Naive thymus-derived CD4-positive, alpha-beta T cell (primary cell): ENCODE measurements at regions of chr6 and their contacts with region 1.

Region 1: GRCh38 chr6:87929843-87930288 is 117.8 kb upstream of the SPACA1 start:
- DNase-seq: peak; percentile 5 to 55 (median 43)
- ATAC-seq: peak; percentile 83
- H3K4me3 ChIP-seq: no peak overlapping the region
- H3K4me3 Mint-ChIP-seq: no peak overlapping the region
- H3K27ac ChIP-seq: no peak overlapping the region
- H3K27ac Mint-ChIP-seq: no peak overlapping the region
- H3K4me1 ChIP-seq: peaks cover 0 to 5% of the 10 kb centered on the region in 2 donors
- H3K4me1 Mint-ChIP-seq: peaks cover 0 to 3% (median 0%) of the 10 kb centered on the region in 7 donors
- H3K27me3 ChIP-seq: no peaks in the 10 kb centered on the region
- H3K27me3 Mint-ChIP-seq: peaks cover 0 to 15% (median 3%) of the 10 kb centered on the region in 5 donors

Region 2: DNA sequence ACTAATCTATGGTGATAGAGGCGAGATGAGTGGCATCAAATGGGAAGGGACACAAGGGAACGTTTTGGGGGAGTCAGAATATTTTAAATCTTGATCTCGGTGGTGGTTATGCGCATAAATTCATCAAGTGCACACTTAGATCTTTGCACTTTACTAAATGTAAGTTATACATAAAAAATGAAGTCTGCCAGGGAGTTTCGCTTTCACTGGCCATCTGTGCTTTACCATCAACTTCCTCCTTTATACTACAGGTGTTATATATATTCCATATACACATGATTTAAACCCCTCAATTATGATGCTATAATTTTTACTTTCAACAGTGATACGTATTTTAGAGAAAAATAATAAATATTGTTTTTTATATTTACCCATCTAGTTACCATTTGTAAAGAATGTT is 130.2 kb before region 1 on chr6:
- CTCF ChIA-PET with region 1: no interaction called
- POLR2A ChIA-PET with region 1: no interaction called
- intact Hi-C with region 1: no loop called
- DNase-seq: no peak
- ATAC-seq: no peak
- H3K4me3 ChIP-seq: no peak overlapping the region
- H3K4me3 Mint-ChIP-seq: no peak overlapping the region
- H3K27ac ChIP-seq: no peak overlapping the region
- H3K27ac Mint-ChIP-seq: peak overlapping the region in 1 of 9 donors; percentile 41
- H3K4me1 ChIP-seq: no peaks in the 10 kb centered on the region
- H3K4me1 Mint-ChIP-seq: peaks cover 0 to 9% (median 5%) of the 10 kb centered on the region in 7 donors
- H3K27me3 ChIP-seq: no peaks in the 10 kb centered on the region
- H3K27me3 Mint-ChIP-seq: peaks cover 4 to 19% (median 10%) of the 10 kb centered on the region in 5 donors

Region 3: DNA sequence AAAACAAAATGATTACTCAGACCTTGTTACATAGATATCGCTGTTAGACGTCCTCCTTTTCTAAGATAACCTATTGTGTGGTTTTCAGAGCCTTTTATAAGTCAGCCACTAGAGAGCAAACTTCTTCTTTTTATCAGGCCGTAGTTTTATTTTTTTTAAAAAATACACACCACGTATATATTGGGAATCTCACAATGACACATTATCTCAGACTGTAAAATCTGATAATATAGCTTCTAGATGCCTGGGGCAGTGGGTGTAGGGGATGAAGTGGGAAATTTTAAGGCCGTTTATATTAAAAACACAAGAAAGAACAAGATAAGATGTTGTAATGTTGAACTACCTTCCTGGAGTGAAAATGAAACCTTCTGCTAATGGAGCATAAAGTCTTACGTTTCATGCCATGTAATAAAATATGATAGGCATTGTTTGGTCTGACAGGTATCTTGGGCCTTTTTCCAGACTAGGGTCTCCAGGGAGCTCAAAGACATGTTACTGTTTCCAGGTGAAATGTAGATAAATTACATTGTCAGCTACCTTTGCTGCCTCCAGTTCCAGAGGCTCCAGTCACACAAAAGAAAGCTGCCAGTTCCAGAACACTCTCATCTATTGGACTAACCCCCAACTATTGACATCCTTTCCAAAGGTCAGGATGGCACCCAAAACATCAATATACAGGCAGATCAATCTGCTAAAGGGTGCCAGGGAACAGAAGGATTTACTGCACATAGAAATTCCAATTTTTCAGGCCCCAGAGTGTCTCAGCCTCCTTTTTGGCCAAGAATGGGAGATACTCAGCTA is 97.6 kb before region 1 on chr6:
- CTCF ChIA-PET with region 1: no interaction called
- POLR2A ChIA-PET with region 1: no interaction called
- intact Hi-C with region 1: loop called in 1 of 2 experiments (anchors 10 kb)
- DNase-seq: peak in 6 of 9 donors; percentile 12 to 50 (median 29)
- ATAC-seq: peak; percentile 81
- H3K4me3 ChIP-seq: peak overlapping the region; percentile 64
- H3K4me3 Mint-ChIP-seq: peak overlapping the region; percentile 69 to 97 (median 89)
- H3K27ac ChIP-seq: peak overlapping the region; percentile 56
- H3K27ac Mint-ChIP-seq: peak overlapping the region; percentile 75 to 95 (median 88)
- H3K4me1 ChIP-seq: no peaks in the 10 kb centered on the region
- H3K4me1 Mint-ChIP-seq: peaks cover 0 to 15% (median 8%) of the 10 kb centered on the region in 7 donors
- H3K27me3 ChIP-seq: no peaks in the 10 kb centered on the region
- H3K27me3 Mint-ChIP-seq: peaks cover 0 to 12% (median 4%) of the 10 kb centered on the region in 5 donors

Region 4: DNA sequence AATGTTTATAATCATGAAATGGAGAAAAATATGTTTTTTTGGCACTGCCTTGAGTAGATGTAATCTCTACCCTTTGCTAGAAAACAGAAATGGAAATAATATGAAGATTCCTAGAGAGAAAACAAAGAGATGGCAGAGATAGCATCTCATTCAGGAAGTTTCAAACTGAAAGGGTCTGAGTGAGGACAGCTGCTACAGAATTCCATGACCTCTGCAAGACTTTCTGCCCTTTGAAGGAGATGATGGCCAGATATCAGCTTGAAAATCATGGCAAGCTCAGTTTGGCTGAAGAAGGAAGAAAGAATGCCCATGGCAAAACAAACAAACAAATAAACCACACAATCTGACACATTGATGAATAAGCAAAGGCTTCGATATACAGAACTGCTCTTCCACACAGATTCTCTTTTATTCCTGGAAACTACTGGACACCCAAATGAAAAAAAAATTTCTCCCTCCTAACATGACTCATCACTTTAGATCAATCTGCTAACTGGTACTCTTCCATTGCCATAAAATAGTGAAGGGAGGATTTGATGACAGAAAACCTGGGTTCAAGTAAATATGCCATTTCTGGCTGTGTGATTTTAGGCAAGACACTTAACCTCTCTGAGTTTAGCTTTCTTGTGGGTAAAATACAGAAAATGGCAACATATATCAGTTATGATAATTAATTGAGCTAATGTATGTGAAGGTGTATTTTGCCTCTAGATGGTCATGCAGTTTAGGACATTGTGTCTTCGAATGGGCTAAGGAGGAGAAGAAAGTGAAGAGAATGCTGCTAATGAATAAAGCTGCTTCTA is 11.9 kb after region 1 on chr6:
- CTCF ChIA-PET with region 1: no interaction called
- POLR2A ChIA-PET with region 1: no interaction called
- intact Hi-C with region 1: no loop called
- DNase-seq: no peak
- ATAC-seq: no peak
- H3K4me3 ChIP-seq: no peak overlapping the region
- H3K4me3 Mint-ChIP-seq: no peak overlapping the region
- H3K27ac ChIP-seq: no peak overlapping the region
- H3K27ac Mint-ChIP-seq: no peak overlapping the region
- H3K4me1 ChIP-seq: no peaks in the 10 kb centered on the region
- H3K4me1 Mint-ChIP-seq: no peaks in the 10 kb centered on the region
- H3K27me3 ChIP-seq: no peaks in the 10 kb centered on the region
- H3K27me3 Mint-ChIP-seq: peaks cover 13 to 41% (median 33%) of the 10 kb centered on the region in 5 donors

Region 5: DNA sequence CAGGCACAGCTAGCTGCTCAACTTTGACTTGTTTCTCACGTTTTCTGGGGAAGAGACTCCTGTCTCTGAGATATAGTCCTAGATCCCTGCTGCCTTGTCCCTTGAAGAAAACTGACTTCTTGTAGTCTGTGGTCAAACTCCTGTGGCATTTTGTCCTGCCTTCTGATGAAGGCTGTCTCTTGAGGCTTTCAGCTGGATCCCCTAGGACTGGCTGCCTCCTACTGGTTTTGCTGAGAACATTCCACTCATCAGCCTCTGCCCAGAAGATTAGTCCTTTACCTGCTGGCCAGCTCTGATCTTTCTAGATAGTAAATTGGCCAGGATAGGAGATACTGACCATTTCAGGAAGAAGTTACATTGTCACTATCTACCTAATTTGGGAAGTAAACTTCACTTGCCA is 308.2 kb after region 1 on chr6:
- CTCF ChIA-PET with region 1: no interaction called
- POLR2A ChIA-PET with region 1: no interaction called
- intact Hi-C with region 1: loop called in 1 of 2 experiments (anchors 1 kb)
- DNase-seq: peak in 3 of 9 donors; percentile 0 to 9 (median 0)
- ATAC-seq: no peak
- H3K4me3 ChIP-seq: no peak overlapping the region
- H3K4me3 Mint-ChIP-seq: no peak overlapping the region
- H3K27ac ChIP-seq: no peak overlapping the region
- H3K27ac Mint-ChIP-seq: no peak overlapping the region
- H3K4me1 ChIP-seq: no peaks in the 10 kb centered on the region
- H3K4me1 Mint-ChIP-seq: no peaks in the 10 kb centered on the region
- H3K27me3 ChIP-seq: no peaks in the 10 kb centered on the region
- H3K27me3 Mint-ChIP-seq: peaks cover 0 to 9% (median 3%) of the 10 kb centered on the region in 5 donors